Activated CD4-positive, alpha-beta memory T cell treated with anti-CD3 and anti-CD28 coated beads for 36 hours (primary cell): ENCODE measurements at regions of chr1 and their contacts with region 1.

Region 1: GRCh38 chr1:28581536-28582247 is 10.4 kb upstream of the RAB42 start:
- DNase-seq: peak; percentile 97
- H3K4me3 Mint-ChIP-seq: peak overlapping the region; percentile 91
- H3K27ac Mint-ChIP-seq: peak overlapping the region; percentile 89
- H3K4me1 Mint-ChIP-seq: peaks cover 29% of the 10 kb centered on the region
- H3K27me3 Mint-ChIP-seq: no peaks in the 10 kb centered on the region

Region 2: DNA sequence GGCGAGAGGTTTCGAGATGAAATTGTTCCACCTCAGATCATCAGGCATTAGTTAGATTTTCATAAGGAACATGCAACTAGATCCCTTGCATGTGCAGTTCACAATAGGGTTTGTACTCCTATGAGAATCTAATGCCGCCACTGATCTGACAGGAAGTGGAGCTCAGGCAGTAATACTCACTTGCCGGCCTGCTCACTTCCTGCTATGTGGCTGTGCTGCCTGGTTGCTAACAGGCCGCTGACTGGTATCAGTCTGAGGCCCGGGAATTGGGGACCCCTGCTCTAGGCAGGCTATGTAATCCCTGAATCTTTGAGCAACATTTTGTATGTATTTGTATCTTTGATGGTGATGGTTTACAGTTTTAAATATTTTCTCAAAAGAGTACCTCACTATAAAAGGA is 589.4 kb before region 1 on chr1:
- CTCF ChIA-PET with region 1: no interaction called
- POLR2A ChIA-PET with region 1: no interaction called
- intact Hi-C with region 1: no loop called
- DNase-seq: peak; percentile 60
- H3K4me3 Mint-ChIP-seq: no peak overlapping the region
- H3K27ac Mint-ChIP-seq: peak overlapping the region; percentile 72
- H3K4me1 Mint-ChIP-seq: peaks cover 25% of the 10 kb centered on the region
- H3K27me3 Mint-ChIP-seq: no peaks in the 10 kb centered on the region

Region 3: DNA sequence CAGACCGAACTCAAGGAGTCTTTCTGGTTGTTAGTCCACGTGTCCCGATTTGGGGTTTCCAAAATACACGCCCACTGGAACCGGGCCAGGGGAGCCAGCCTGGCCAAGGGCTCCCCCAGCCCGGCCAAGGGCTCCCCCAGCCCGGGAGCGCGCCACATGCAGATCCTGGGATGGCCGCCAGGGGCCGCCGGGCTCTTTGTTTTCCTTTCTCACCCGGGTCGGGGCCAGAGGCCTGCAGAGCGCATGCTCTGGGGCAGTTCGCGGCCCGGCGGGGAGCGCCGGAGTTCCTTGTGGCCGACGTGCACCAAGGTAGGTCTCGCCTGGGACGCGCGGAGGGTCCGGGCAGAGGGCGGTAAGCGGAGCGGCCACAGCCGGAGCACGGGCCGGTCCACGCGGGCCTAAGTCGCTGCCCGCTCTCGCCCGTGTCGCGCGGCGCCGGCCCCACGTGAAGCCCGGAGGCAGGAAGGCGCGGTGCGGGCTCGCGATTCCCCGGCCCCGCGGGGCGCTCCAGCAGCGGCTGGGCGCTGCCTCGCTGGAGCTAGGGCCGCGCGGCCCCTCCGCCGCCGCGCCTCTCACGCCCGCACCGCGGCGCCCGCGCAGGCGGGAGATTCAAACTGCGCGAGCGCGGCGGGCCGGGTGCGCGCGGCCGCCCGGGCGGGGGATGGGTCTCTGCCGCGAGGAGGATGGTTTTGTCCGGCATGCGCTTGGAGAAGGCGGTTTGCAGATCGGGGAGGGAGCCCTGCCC is 63.5 kb before region 1 on chr1:
- CTCF ChIA-PET with region 1: interaction called, 25 read pairs
- POLR2A ChIA-PET with region 1: interaction called, 180 read pairs
- intact Hi-C with region 1: loop called (anchors 1 kb)
- DNase-seq: peak; percentile 93
- H3K4me3 Mint-ChIP-seq: peak overlapping the region; percentile 88
- H3K27ac Mint-ChIP-seq: peak overlapping the region; percentile 93
- H3K4me1 Mint-ChIP-seq: peaks cover 41% of the 10 kb centered on the region
- H3K27me3 Mint-ChIP-seq: no peaks in the 10 kb centered on the region

Region 4: GRCh38 chr1:28565040-28565439 is 16.7 kb before region 1 on chr1:
- CTCF ChIA-PET with region 1: interaction called, 3 read pairs
- POLR2A ChIA-PET with region 1: interaction called, 19 read pairs
- intact Hi-C with region 1: no loop called
- DNase-seq: no peak
- H3K4me3 Mint-ChIP-seq: no peak overlapping the region
- H3K27ac Mint-ChIP-seq: no peak overlapping the region
- H3K4me1 Mint-ChIP-seq: no peaks in the 10 kb centered on the region
- H3K27me3 Mint-ChIP-seq: no peaks in the 10 kb centered on the region

Region 5: GRCh38 chr1:28642847-28643635 is 61.3 kb after region 1 on chr1 and contains the start of gene TAF12:
- CTCF ChIA-PET with region 1: interaction called, 5 read pairs
- POLR2A ChIA-PET with region 1: interaction called, 80 read pairs
- intact Hi-C with region 1: loop called (anchors 1 kb)
- DNase-seq: peak; percentile 95
- H3K4me3 Mint-ChIP-seq: peak within 1 kb of the TSS; percentile 93
- H3K27ac Mint-ChIP-seq: peak within 1 kb of the TSS; percentile 96
- H3K4me1 Mint-ChIP-seq: peaks cover 45% of the 10 kb centered on the region
- H3K27me3 Mint-ChIP-seq: no peaks in the 10 kb centered on the region
- total RNA-seq, gene TAF12: 26.8 to 27.5 TPM

Region 6: DNA sequence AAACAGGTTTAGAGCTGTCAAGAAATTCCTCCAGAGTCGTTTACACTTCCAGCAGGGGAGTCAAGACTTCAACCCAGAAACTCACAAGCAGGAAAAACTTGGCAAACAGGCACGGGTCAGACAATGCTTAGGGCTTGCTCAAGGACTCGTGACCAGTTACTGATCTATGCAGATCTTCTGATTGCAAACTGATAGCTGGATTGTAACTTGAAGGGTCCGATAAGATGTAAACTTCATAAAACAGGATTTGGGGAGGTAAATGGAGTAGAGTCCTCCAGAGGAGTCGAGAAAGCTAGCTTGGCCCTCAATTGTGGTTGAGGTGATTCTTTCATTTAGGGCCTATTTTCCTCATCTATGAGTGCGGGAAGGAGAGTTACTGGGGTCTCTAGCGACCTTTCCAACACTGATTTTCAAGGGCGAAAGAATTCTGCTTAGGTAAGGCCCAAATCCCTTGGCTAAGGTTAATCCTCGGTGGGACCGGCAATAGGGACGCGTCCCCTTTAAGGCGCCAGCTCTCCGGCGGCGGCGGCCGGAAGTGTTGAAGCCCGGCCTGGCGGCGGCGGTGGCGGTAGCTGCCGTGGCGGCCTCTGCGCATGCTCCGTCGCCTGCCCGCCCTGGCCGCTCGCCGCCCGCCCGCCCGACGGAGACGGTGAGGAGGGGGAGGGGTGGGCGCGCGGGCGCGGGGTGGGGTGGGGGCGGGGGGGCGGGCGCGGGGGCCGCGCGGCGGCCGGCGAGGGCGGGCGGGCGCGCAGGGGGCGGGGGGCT is 86.7 kb after region 1 on chr1 and contains the start of gene GMEB1:
- CTCF ChIA-PET with region 1: no interaction called
- POLR2A ChIA-PET with region 1: interaction called, 19 read pairs
- intact Hi-C with region 1: no loop called
- DNase-seq: peak; percentile 91
- H3K4me3 Mint-ChIP-seq: peak within 1 kb of the TSS; percentile 95
- H3K27ac Mint-ChIP-seq: peak within 1 kb of the TSS; percentile 99
- H3K4me1 Mint-ChIP-seq: peaks cover 12% of the 10 kb centered on the region
- H3K27me3 Mint-ChIP-seq: no peaks in the 10 kb centered on the region
- total RNA-seq, gene GMEB1: 21.4 to 22.6 TPM